ENCODE measurements at regions of chr12 and their contacts with region 1.

Region 1: GRCh38 chr12:9064201-9064814 is 51.4 kb downstream of the A2M start:
- DNase-seq: peak; percentile 80 to 87
- H3K4me3 ChIP-seq: peak overlapping the region; percentile 94
- H3K4me3 Mint-ChIP-seq: peak overlapping the region; percentile 74
- H3K27ac Mint-ChIP-seq: peak overlapping the region; percentile 66
- H3K4me1 ChIP-seq: peaks cover 8% of the 10 kb centered on the region
- H3K4me1 Mint-ChIP-seq: peaks cover 8% of the 10 kb centered on the region
- H3K27me3 ChIP-seq: no peaks in the 10 kb centered on the region
- H3K27me3 Mint-ChIP-seq: no peaks in the 10 kb centered on the region
- CTCF ChIP-seq: peak; percentile 64 to 72

Region 2: DNA sequence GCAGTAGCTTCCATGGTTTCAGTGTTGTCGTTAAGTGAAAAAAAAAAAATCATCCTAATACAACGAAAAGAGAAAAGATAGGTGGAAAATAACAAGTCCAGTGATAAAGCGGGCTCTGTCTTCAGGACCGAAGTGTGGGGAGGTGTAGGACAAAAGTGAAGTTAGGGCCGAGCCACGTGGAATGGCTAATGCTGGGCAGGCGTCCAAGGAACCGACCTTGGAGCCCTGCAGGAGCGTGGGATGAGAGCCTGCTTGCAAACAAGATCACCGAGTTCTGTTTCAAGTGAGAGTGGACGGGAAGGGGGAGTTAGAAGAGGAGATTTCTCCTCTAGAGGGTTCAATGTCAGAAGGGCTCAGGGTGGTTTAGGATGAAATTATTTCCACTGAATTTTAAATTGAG is 219.6 kb before region 1 on chr12:
- CTCF ChIA-PET with region 1: no interaction called
- POLR2A ChIA-PET with region 1: no interaction called
- intact Hi-C with region 1: no loop called
- DNase-seq: no peak
- H3K4me3 ChIP-seq: no peak overlapping the region
- H3K4me3 Mint-ChIP-seq: no peak overlapping the region
- H3K27ac Mint-ChIP-seq: no peak overlapping the region
- H3K4me1 ChIP-seq: no peaks in the 10 kb centered on the region
- H3K4me1 Mint-ChIP-seq: no peaks in the 10 kb centered on the region
- H3K27me3 ChIP-seq: no peaks in the 10 kb centered on the region
- H3K27me3 Mint-ChIP-seq: peaks cover 29% of the 10 kb centered on the region
- CTCF ChIP-seq: no peak

Region 3: DNA sequence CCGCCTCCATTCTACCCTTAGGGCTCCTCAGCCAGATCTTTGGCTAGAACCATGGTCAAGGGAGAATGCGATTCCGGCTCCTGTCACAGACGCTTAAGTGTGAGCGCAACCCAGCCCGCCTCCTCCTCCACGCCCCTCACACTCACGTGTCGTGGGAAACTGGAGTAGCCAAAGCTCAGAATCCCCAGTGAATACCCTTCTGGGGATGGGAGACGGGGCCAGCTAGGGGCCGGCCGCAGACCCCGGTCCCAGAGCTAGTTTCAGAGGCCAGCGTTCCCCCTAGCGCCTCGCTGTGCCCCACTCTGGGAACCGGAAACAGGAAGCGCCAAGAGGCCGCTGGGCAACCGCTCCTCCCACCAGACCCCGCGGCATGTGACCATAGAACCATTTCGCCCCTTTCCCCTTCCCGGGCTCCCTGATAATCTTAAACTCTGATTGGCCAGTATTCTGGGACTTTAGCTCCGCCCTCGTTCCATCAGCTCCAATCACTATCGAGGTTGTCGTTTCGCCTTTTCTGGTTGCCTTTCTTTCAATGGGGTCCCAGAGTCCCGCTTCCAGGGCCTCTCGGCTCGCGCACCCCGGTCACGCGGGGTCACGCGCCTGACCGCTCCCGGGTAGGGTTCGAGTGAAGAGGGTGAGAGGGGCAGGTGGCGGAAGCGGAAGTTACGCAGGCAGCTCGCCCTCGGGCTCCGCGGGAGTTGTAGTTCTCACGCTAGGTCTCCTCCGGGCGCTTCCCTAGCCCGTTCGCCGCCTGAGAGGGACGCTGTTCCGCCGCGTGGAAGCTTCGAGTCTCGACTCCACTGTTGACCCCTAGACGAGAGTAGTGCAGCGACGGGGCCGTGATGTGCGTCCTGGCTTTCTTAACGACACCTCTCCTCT is 114.7 kb before region 1 on chr12 and contains the start of gene M6PR:
- CTCF ChIA-PET with region 1: interaction called, 7 read pairs
- POLR2A ChIA-PET with region 1: interaction called, 14 read pairs
- intact Hi-C with region 1: no loop called
- DNase-seq: peak; percentile 98
- H3K4me3 ChIP-seq: peak within 1 kb of the TSS; percentile 69
- H3K4me3 Mint-ChIP-seq: peak within 1 kb of the TSS; percentile 83
- H3K27ac Mint-ChIP-seq: peak within 1 kb of the TSS; percentile 77
- H3K4me1 ChIP-seq: peaks cover 6% of the 10 kb centered on the region
- H3K4me1 Mint-ChIP-seq: peaks cover 9% of the 10 kb centered on the region
- H3K27me3 ChIP-seq: no peaks in the 10 kb centered on the region
- H3K27me3 Mint-ChIP-seq: no peaks in the 10 kb centered on the region
- CTCF ChIP-seq: peak; percentile 42 to 91
- total RNA-seq, gene M6PR: 303 and 310 TPM in 2 replicates

Region 4: DNA sequence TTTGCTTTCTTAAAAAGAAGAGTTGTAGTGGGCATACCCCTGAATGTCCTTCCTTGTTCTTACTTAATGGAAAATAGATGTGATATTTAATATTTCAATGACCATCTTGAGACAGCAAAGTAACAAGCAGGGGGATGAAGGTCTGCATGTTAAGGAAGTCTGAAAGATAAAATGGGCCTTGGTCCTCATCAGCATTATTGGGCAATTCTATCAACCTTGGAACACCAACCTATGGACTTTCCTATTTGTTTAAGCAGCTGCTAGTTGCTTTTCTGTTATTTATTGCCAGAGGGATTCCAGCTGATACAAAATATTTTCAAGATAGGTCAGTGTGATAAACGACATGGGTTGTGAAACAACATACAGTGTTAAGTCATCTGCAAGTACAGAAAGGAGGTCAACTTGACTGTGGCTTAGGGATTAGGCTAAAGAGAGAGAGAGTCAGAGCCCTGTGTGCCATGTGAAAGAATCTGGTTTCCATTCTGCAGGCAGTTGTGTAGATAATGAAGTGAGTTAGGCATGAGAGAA is 67.8 kb after region 1 on chr12:
- CTCF ChIA-PET with region 1: interaction called, 5 read pairs
- POLR2A ChIA-PET with region 1: no interaction called
- intact Hi-C with region 1: loop called (anchors 1 kb)
- DNase-seq: peak; percentile 73 to 84
- H3K4me3 ChIP-seq: no peak overlapping the region
- H3K4me3 Mint-ChIP-seq: peak overlapping the region; percentile 51
- H3K27ac Mint-ChIP-seq: peak overlapping the region; percentile 81
- H3K4me1 ChIP-seq: peaks cover 39% of the 10 kb centered on the region
- H3K4me1 Mint-ChIP-seq: peaks cover 23% of the 10 kb centered on the region
- H3K27me3 ChIP-seq: no peaks in the 10 kb centered on the region
- H3K27me3 Mint-ChIP-seq: no peaks in the 10 kb centered on the region
- CTCF ChIP-seq: no peak

Region 5: DNA sequence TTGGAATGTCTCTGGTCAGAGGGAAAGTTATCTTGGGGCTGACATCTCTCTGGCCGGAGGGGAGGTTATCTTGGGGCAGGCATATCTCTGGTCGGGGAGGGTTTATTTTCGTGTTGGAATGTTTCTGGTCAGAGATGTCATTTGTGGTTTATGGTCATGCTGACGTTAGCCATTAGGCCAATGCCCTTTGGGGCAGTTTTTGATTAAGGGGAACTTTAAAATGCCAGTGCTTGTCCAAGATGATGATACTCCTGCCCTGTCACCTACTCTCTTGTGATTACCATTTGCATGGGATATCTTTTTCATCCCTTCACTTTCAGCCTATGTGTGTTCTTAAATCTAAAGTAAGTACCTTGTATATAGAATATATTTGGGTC is 80.4 kb after region 1 on chr12:
- CTCF ChIA-PET with region 1: no interaction called
- POLR2A ChIA-PET with region 1: no interaction called
- intact Hi-C with region 1: no loop called
- DNase-seq: peak; percentile 49 to 68
- H3K4me3 ChIP-seq: no peak overlapping the region
- H3K4me3 Mint-ChIP-seq: no peak overlapping the region
- H3K27ac Mint-ChIP-seq: peak overlapping the region; percentile 1
- H3K4me1 ChIP-seq: peaks cover 13% of the 10 kb centered on the region
- H3K4me1 Mint-ChIP-seq: peaks cover 21% of the 10 kb centered on the region
- H3K27me3 ChIP-seq: no peaks in the 10 kb centered on the region
- H3K27me3 Mint-ChIP-seq: no peaks in the 10 kb centered on the region
- CTCF ChIP-seq: no peak

Region 6: GRCh38 chr12:9273276-9273675 is 209.0 kb after region 1 on chr12:
- CTCF ChIA-PET with region 1: no interaction called
- POLR2A ChIA-PET with region 1: no interaction called
- intact Hi-C with region 1: loop called (anchors 2 kb)
- DNase-seq: no peak
- H3K4me3 ChIP-seq: no peak overlapping the region
- H3K4me3 Mint-ChIP-seq: no peak overlapping the region
- H3K27ac Mint-ChIP-seq: no peak overlapping the region
- H3K4me1 ChIP-seq: peaks cover 14% of the 10 kb centered on the region
- H3K4me1 Mint-ChIP-seq: peaks cover 5% of the 10 kb centered on the region
- H3K27me3 ChIP-seq: no peaks in the 10 kb centered on the region; the same call in 1 of the 2 replicates
- H3K27me3 Mint-ChIP-seq: peaks cover 11% of the 10 kb centered on the region
- CTCF ChIP-seq: no peak

Region 7: GRCh38 chr12:9372202-9372601 is 307.9 kb after region 1 on chr12:
- CTCF ChIA-PET with region 1: interaction called, 5 read pairs
- POLR2A ChIA-PET with region 1: no interaction called
- intact Hi-C with region 1: loop called (anchors 1 kb)
- DNase-seq: peak in 1 of 2 experiments; percentile 33
- H3K4me3 ChIP-seq: no peak overlapping the region
- H3K4me3 Mint-ChIP-seq: no peak overlapping the region
- H3K27ac Mint-ChIP-seq: no peak overlapping the region
- H3K4me1 ChIP-seq: no peaks in the 10 kb centered on the region
- H3K4me1 Mint-ChIP-seq: no peaks in the 10 kb centered on the region
- H3K27me3 ChIP-seq: no peaks in the 10 kb centered on the region; the same call in 1 of the 2 replicates
- H3K27me3 Mint-ChIP-seq: peaks cover 21% of the 10 kb centered on the region
- CTCF ChIP-seq: peak; percentile 25 to 59